ENCODE measurements at regions of chr11 and their contacts with region 1.

Region 1: GRCh38 chr11:88337181-88337986 is at the start of gene CTSC:
- DNase-seq: peak; percentile 85
- H3K4me3 ChIP-seq: peak within 1 kb of the TSS; percentile 92 to 99 (median 95)
- H3K27ac ChIP-seq: peak within 1 kb of the TSS; percentile 78
- H3K4me1 ChIP-seq: peaks cover 27% of the 10 kb centered on the region
- H3K27me3 ChIP-seq: no peaks in the 10 kb centered on the region
- CTCF ChIP-seq: no peak
- POLR2A ChIP-seq: peak; percentile 96
- total RNA-seq, gene CTSC: 130 and 226 TPM in 2 replicates

Region 2: DNA sequence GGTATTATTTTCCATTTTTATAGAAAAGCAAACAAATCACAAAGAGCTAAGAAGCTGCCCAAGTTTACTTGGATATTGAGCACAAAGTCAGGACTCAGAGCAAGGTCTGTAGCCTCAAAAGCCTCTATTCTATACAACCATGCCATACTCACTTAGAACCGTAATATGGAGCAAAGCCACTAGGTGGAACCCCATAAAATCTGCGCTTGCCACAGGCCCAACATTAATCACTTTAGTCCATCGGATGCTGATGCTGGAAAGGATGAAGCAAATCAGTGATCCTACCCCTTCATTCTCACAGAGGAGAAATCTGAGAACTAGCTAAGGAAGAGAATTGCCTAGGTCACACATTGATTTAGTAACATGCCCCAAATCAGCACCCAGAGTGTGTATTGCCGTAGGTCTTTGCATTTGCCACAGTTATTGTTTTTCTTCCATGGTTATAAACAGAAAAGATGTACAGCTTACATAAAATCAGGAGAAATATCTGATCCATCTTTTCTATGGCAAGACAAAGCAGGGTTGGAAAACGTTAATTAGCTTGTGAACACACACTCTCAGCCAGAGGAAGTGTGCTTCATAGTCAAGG is 105.4 kb before region 1 on chr11:
- CTCF ChIA-PET with region 1: interaction called, 7 read pairs
- POLR2A ChIA-PET with region 1: no interaction called
- dilution Hi-C with region 1: no loop called
- intact Hi-C with region 1: loop called (anchors 1 kb)
- DNase-seq: peak; percentile 59
- H3K4me3 ChIP-seq: no peak overlapping the region
- H3K27ac ChIP-seq: no peak overlapping the region
- H3K4me1 ChIP-seq: no peaks in the 10 kb centered on the region
- H3K27me3 ChIP-seq: no peaks in the 10 kb centered on the region
- CTCF ChIP-seq: peak; percentile 48 to 63
- POLR2A ChIP-seq: no peak

Region 3: GRCh38 chr11:88327061-88327460 is 10.3 kb before region 1 on chr11:
- CTCF ChIA-PET with region 1: interaction called, 14 read pairs
- POLR2A ChIA-PET with region 1: interaction called, 5 read pairs
- dilution Hi-C with region 1: no loop called
- intact Hi-C with region 1: loop called (anchors 1 kb)
- DNase-seq: no peak
- H3K4me3 ChIP-seq: no peak overlapping the region
- H3K27ac ChIP-seq: no peak overlapping the region
- H3K4me1 ChIP-seq: peaks cover 17% of the 10 kb centered on the region
- H3K27me3 ChIP-seq: no peaks in the 10 kb centered on the region
- CTCF ChIP-seq: no peak
- POLR2A ChIP-seq: no peak

Region 4: DNA sequence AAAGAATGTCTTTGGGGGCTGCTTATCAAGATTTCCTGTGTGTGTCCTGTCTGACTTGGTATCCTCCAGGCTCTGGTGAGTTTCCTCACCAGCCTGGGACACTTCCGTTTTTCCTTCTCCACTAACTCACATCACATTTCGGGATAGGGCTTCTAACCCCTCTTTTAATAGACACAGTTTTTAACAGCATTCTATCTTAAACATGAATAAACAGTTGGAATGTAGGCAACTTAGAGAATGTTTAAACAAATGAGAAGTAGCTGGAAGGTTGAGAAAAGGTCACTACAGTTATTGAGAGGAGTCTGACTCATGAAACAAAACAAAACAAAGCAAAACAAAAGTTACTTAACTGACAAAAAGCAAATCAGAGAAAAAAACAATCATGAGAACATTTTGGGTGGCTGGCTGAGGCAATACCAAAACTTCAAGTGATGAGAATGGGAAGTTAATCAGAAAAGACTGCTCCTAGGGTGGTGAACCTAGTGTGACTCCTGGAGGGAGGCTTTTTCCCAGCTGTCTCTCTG is 64.9 kb after region 1 on chr11:
- CTCF ChIA-PET with region 1: no interaction called
- POLR2A ChIA-PET with region 1: no interaction called
- dilution Hi-C with region 1: no loop called
- intact Hi-C with region 1: loop called (anchors 1 kb)
- DNase-seq: peak; percentile 93
- H3K4me3 ChIP-seq: peak overlapping the region in 1 of 3 experiments; percentile 43
- H3K27ac ChIP-seq: peak overlapping the region; percentile 95
- H3K4me1 ChIP-seq: peaks cover 50% of the 10 kb centered on the region
- H3K27me3 ChIP-seq: no peaks in the 10 kb centered on the region
- CTCF ChIP-seq: no peak
- POLR2A ChIP-seq: no peak

Region 5: GRCh38 chr11:88414385-88414861 is 77.0 kb after region 1 on chr11:
- CTCF ChIA-PET with region 1: interaction called, 4 read pairs
- POLR2A ChIA-PET with region 1: interaction called, 3 read pairs
- dilution Hi-C with region 1: no loop called
- intact Hi-C with region 1: loop called (anchors 1 kb)
- DNase-seq: peak; percentile 92
- H3K4me3 ChIP-seq: no peak overlapping the region
- H3K27ac ChIP-seq: no peak overlapping the region
- H3K4me1 ChIP-seq: peaks cover 18% of the 10 kb centered on the region
- H3K27me3 ChIP-seq: no peaks in the 10 kb centered on the region
- CTCF ChIP-seq: no peak
- POLR2A ChIP-seq: no peak